ENCODE measurements at regions of chr3 and their contacts with region 1.

Region 1: GRCh38 chr3:143163562-143164100 is 44.1 kb downstream of the CHST2 start:
- DNase-seq: no peak
- ATAC-seq: no peak
- H3K4me3 ChIP-seq: no peak overlapping the region
- H3K4me3 Mint-ChIP-seq: peak overlapping the region in 5 of 10 donors; percentile 20 to 70 (median 55)
- H3K27ac ChIP-seq: no peak overlapping the region
- H3K27ac Mint-ChIP-seq: peak overlapping the region; percentile 48 to 88 (median 77)
- H3K4me1 ChIP-seq: peaks cover 0 to 29% of the 10 kb centered on the region in 2 donors
- H3K4me1 Mint-ChIP-seq: peaks cover 42 to 73% (median 55%) of the 10 kb centered on the region in 7 donors
- H3K27me3 ChIP-seq: no peaks in the 10 kb centered on the region
- H3K27me3 Mint-ChIP-seq: no peaks in the 10 kb centered on the region

Region 2: GRCh38 chr3:143152043-143152442 is 11.6 kb before region 1 on chr3:
- CTCF ChIA-PET with region 1: interaction called, 3 read pairs
- POLR2A ChIA-PET with region 1: interaction called, 3 read pairs
- intact Hi-C with region 1: loop called in 1 of 2 experiments (anchors 1 kb)
- DNase-seq: no peak
- ATAC-seq: no peak
- H3K4me3 ChIP-seq: no peak overlapping the region
- H3K4me3 Mint-ChIP-seq: peak overlapping the region in 2 of 10 donors; percentile 14 to 18
- H3K27ac ChIP-seq: no peak overlapping the region
- H3K27ac Mint-ChIP-seq: peak overlapping the region in 4 of 9 donors; percentile 26 to 70 (median 50)
- H3K4me1 ChIP-seq: peaks cover 0 to 3% of the 10 kb centered on the region in 2 donors
- H3K4me1 Mint-ChIP-seq: peaks cover 0 to 45% (median 35%) of the 10 kb centered on the region in 7 donors
- H3K27me3 ChIP-seq: no peaks in the 10 kb centered on the region
- H3K27me3 Mint-ChIP-seq: no peaks in the 10 kb centered on the region

Region 3: GRCh38 chr3:143283432-143284128 is 119.9 kb after region 1 on chr3:
- CTCF ChIA-PET with region 1: no interaction called
- POLR2A ChIA-PET with region 1: no interaction called
- intact Hi-C with region 1: no loop called
- DNase-seq: no peak
- ATAC-seq: no peak
- H3K4me3 ChIP-seq: no peak overlapping the region
- H3K4me3 Mint-ChIP-seq: no peak overlapping the region
- H3K27ac ChIP-seq: no peak overlapping the region
- H3K27ac Mint-ChIP-seq: peak overlapping the region in 1 of 9 donors; percentile 5
- H3K4me1 ChIP-seq: no peaks in the 10 kb centered on the region
- H3K4me1 Mint-ChIP-seq: peaks cover 0 to 34% (median 14%) of the 10 kb centered on the region in 7 donors
- H3K27me3 ChIP-seq: no peaks in the 10 kb centered on the region
- H3K27me3 Mint-ChIP-seq: no peaks in the 10 kb centered on the region

Measured in naive thymus-derived CD4-positive, alpha-beta T cell (primary cell).